ENCODE measurements at regions of chr1 and their contacts with region 1.

Region 1: DNA sequence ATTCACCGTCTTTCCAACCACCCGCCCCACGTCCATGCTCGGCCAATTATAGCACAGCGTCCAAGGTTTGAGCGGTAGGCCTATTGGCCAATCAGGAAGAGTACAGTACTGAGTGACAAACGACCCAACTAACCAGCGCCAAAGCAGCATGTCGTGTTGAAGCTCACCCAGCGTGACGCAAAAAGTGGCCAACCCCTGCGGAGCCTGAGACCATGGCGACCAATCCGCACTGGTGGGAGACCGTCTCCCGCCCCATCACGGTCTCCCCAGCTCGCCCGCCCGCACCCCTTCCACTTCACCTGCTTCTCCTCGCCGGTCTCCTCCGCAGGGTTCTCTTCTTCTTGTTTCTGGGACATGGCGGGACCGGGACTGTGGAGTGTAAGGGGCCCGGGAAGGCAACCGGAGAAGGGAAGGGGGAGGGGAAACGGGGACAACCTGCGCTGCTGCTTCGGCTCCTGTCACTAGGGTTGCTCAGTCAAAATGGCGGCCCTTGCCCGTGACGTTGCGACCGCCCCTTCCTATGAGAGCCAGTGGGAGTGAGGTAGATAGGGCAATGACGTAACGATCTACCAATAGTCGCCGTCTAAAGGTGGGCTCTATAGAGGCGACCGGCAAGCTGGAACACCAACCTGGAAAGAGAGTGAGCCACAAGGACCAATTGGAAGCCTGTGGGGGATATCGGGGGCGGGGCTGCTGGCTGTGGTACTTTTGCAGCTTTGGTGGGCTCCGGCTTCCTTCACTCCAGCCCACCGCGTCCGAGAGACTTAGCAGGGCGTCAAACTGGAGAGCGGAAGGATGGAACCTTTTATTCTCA is at the start of gene ENSA:
- DNase-seq: peak; percentile 99
- H3K4me3 ChIP-seq: peak within 1 kb of the TSS; percentile 55 to 89 (median 67)
- H3K27ac ChIP-seq: peak within 1 kb of the TSS; percentile 71
- H3K4me1 ChIP-seq: peaks cover 11% of the 10 kb centered on the region
- H3K27me3 ChIP-seq: no peaks in the 10 kb centered on the region
- CTCF ChIP-seq: no peak
- POLR2A ChIP-seq: peak; percentile 38
- total RNA-seq, gene ENSA: 155 and 162 TPM in 2 replicates

Region 2: GRCh38 chr1:150309770-150310508 is 319.4 kb before region 1 on chr1:
- CTCF ChIA-PET with region 1: no interaction called
- POLR2A ChIA-PET with region 1: no interaction called
- dilution Hi-C with region 1: no loop called
- intact Hi-C with region 1: no loop called
- DNase-seq: no peak
- H3K4me3 ChIP-seq: no peak overlapping the region
- H3K27ac ChIP-seq: no peak overlapping the region
- H3K4me1 ChIP-seq: no peaks in the 10 kb centered on the region
- H3K27me3 ChIP-seq: no peaks in the 10 kb centered on the region
- CTCF ChIP-seq: no peak
- POLR2A ChIP-seq: peak; percentile 27

Region 3: GRCh38 chr1:150567717-150568593 is 61.4 kb before region 1 on chr1:
- CTCF ChIA-PET with region 1: interaction called, 288 read pairs
- POLR2A ChIA-PET with region 1: interaction called, 4 read pairs
- dilution Hi-C with region 1: no loop called
- intact Hi-C with region 1: loop called (anchors 2 kb)
- DNase-seq: peak; percentile 98
- H3K4me3 ChIP-seq: no peak overlapping the region
- H3K27ac ChIP-seq: peak overlapping the region; percentile 84
- H3K4me1 ChIP-seq: peaks cover 49% of the 10 kb centered on the region
- H3K27me3 ChIP-seq: no peaks in the 10 kb centered on the region
- CTCF ChIP-seq: no peak
- POLR2A ChIP-seq: no peak

Region 4: DNA sequence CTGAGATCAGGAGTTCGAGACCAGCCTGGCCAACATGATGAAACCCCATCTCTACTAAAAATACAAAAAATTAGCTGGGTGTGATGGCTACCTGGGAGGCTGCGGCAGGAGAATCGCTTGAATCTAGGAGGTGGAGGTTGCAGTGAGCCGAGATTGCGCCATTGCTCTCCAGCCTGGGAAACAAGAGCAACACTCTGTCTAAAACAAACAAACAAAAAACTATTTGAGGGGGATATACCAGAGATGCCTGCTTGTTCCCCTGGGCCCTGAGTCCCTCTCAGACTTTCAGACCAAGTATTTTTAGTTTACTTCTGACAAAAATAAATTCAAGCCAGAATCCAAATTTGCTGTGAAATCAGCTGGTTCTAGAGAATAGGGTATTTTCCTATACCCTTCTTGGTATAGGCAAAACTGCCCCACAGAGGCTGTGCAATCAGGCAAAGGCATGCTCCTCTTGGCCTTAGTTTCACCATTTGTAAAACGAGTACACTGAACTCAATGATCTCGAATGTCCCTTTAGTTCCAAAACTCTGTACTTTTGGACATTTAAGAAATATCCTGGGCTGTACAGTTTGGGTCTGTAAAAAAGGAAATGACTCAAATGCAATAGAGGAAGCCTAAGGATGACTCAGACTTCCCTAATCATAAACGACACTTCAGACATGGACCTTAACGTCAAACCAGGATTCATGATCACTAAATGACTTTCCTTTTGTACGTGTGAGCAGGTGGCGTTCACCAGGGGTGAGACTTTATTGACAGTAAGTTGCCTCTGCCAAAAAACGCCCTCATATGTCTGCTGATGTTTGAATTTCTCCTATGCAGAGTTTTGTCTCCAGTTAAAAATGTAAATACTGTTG is 16.0 kb before region 1 on chr1:
- CTCF ChIA-PET with region 1: interaction called, 3 read pairs
- POLR2A ChIA-PET with region 1: interaction called, 4 read pairs
- dilution Hi-C with region 1: no loop called
- intact Hi-C with region 1: loop called (anchors 2 kb)
- DNase-seq: peak; percentile 94
- H3K4me3 ChIP-seq: peak overlapping the region in 1 of 3 experiments; percentile 14
- H3K27ac ChIP-seq: peak overlapping the region; percentile 100
- H3K4me1 ChIP-seq: peaks cover 43% of the 10 kb centered on the region
- H3K27me3 ChIP-seq: no peaks in the 10 kb centered on the region
- CTCF ChIP-seq: no peak
- POLR2A ChIP-seq: peak; percentile 78

Region 5: DNA sequence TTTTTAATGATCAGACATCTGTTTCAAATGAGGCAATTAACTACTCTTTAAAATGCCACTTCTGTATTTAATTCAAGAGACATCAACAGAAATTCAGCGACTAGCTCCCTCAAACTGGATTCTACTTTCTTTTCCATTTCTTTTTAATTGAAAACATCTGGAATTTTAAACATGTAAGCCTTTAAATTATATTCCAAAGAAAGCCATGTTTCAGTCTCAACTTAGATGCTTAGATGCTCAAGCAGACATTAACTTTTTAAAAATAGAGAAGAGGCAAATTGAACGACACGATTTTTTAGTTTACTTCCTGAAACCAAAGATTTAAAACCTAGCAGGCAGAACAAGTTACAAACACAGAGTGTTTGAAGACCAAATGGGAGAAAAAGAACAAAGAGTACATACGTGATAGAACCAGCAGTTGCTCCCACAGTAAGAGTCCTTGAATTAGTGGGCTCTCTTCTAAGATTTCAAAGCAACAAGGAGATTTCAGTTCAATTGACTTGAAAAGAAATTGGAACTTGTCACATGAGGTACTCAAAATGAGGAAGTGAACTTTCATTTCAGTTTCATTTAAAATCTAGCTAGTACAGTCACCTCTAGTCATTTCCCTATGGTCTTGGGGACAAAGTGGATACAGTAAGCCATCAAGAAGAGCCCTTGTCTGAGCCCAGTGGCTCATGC is 136.1 kb after region 1 on chr1 and contains the start of gene CTSS:
- CTCF ChIA-PET with region 1: no interaction called
- POLR2A ChIA-PET with region 1: no interaction called
- dilution Hi-C with region 1: no loop called
- intact Hi-C with region 1: loop called (anchors 1 kb)
- DNase-seq: peak; percentile 58
- H3K4me3 ChIP-seq: peak within 1 kb of the TSS in 1 of 3 experiments; percentile 6
- H3K27ac ChIP-seq: peak within 1 kb of the TSS; percentile 80
- H3K4me1 ChIP-seq: peaks cover 23% of the 10 kb centered on the region
- H3K27me3 ChIP-seq: no peaks in the 10 kb centered on the region
- CTCF ChIP-seq: no peak
- POLR2A ChIP-seq: no peak
- total RNA-seq, gene CTSS: 5.7 and 11.1 TPM in 2 replicates

Region 6: GRCh38 chr1:150876119-150876454 is 246.8 kb after region 1 on chr1:
- CTCF ChIA-PET with region 1: no interaction called
- POLR2A ChIA-PET with region 1: no interaction called
- dilution Hi-C with region 1: no loop called
- intact Hi-C with region 1: loop called (anchors 1 kb)
- DNase-seq: peak; percentile 73
- H3K4me3 ChIP-seq: peak overlapping the region; percentile 81 to 92 (median 91)
- H3K27ac ChIP-seq: peak overlapping the region; percentile 74
- H3K4me1 ChIP-seq: peaks cover 13% of the 10 kb centered on the region
- H3K27me3 ChIP-seq: no peaks in the 10 kb centered on the region
- CTCF ChIP-seq: no peak
- POLR2A ChIP-seq: no peak